ENCODE measurements at regions of chr10 and their contacts with region 1.

Region 1: DNA sequence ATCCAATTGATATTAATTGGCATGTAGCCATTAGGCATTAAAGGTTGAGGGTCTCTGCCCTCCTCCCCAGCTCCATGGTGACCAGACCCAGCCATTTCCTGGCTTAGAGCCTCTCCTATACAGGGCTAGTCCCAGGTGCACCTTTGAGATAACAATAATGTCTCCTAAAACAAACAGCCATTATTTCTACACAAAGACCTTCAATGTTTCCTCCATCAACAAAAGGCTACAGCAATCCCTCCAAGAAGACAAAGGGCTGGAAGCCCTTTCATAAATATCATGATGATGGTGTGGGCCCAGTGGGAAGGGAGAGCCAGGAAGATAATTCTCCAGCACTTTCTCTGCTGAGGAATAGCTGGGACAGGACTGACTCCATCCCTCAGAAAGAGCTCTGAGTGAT is 10.3 kb downstream of the PKD2L1 start:
- DNase-seq: no peak
- ATAC-seq: no peak
- H3K4me3 ChIP-seq: no peak overlapping the region
- H3K27ac ChIP-seq: no peak overlapping the region
- H3K4me1 ChIP-seq: no peaks in the 10 kb centered on the region
- H3K27me3 ChIP-seq: peaks cover 14% of the 10 kb centered on the region; the same call in 1 of the 2 replicates
- CTCF ChIP-seq: no peak

Region 2: GRCh38 chr10:100167553-100168312 is 152.0 kb before region 1 on chr10:
- CTCF ChIA-PET with region 1: interaction called, 10 read pairs
- POLR2A ChIA-PET with region 1: no interaction called
- in situ Hi-C with region 1: no loop called
- intact Hi-C with region 1: no loop called
- DNase-seq: no peak
- ATAC-seq: no peak
- H3K4me3 ChIP-seq: no peak overlapping the region
- H3K27ac ChIP-seq: 0 out of 2 replicates have a peak overlapping the region, but pooled peaks have one; percentile 14
- H3K4me1 ChIP-seq: peaks cover 6% of the 10 kb centered on the region; the same call in 1 of the 2 replicates
- H3K27me3 ChIP-seq: no peaks in the 10 kb centered on the region
- CTCF ChIP-seq: no peak

Region 3: GRCh38 chr10:100297242-100297641 is 22.5 kb before region 1 on chr10:
- CTCF ChIA-PET with region 1: no interaction called
- POLR2A ChIA-PET with region 1: interaction called, 14 read pairs
- in situ Hi-C with region 1: no loop called
- intact Hi-C with region 1: no loop called
- DNase-seq: no peak
- ATAC-seq: no peak
- H3K4me3 ChIP-seq: no peak overlapping the region
- H3K27ac ChIP-seq: no peak overlapping the region
- H3K4me1 ChIP-seq: no peaks in the 10 kb centered on the region
- H3K27me3 ChIP-seq: 0 out of 2 replicates have a peak, but pooled peaks cover 4% of the 10 kb centered on the region
- CTCF ChIP-seq: no peak